Activated naive CD4-positive, alpha-beta T cell treated with anti-CD3 and anti-CD28 coated beads for 36 hours (primary cell): ENCODE measurements at regions of chr2 and their contacts with region 1.

Region 1: DNA sequence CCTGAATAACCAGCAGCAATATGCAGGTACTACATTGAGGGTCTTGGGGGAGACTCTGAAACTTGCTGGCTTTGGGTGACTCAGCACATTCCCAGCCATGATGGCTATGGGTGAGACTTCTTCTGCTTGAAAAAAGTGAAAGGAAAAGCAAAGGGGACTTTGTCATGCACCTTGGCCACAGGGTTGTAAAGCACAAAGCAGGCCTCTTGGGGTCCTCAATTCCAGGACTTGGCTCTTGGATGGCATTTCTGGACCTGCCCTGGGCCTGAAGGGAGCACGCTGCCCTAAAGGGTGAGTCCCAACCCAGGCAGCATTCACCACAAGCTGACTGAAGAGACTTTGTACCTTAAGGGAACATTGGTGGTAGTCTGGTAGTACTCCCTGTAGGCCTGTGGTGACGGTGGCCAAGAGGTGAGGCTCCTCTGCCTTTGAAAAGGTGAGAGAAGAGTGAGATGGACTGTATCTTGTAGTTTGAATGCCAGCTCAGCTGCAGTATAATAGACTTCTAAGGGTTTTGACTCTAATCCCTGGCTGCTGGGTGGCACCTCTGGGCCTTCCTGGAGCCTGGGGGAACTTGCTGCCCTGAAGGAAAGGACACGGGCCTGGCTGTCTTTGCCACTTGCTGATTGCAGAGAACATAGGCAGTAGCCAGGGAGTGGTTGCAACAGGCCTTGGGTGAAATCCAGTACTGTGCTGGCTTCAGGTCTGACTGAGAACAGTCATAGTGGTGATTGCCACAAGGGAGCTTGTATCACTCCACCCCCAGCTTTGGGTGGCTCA is 36.5 kb upstream of the CYTIP start:
- DNase-seq: peak; percentile 83
- H3K4me3 Mint-ChIP-seq: peak overlapping the region; percentile 64
- H3K27ac Mint-ChIP-seq: peak overlapping the region; percentile 95
- H3K4me1 Mint-ChIP-seq: peaks cover 85% of the 10 kb centered on the region
- H3K27me3 Mint-ChIP-seq: no peaks in the 10 kb centered on the region

Region 2: DNA sequence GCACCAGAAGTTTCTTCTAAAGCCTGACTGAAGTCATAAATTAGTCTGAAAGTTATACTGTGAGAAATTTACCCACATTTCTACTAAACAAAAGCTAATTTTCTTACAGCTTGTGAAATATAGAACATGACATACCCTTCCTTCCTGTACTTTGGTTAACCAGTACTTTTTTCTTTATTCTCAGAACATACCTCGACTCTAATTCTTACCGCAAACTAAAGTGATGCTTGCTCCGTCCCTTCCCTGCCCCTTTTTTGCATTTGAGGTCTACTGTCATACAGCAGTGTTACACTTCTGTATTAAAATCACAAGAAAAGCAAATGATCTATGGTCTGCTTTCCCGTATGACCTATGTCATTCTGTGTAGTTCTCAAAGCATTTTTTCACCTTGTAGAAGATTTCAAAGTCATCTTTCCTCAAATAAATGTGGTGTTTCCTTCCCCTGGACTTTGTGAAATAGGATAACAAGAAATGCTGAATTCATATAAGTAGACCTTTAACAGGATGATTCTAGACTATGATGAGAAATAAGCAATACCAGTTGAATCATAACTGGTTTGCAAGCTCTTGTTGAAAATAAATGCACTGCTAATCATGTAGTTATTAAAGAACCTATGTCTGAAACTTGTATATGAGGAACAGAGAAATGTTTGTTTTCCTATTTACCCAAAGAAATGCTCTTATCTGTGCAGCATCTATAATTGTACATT is 66.9 kb before region 1 on chr2:
- CTCF ChIA-PET with region 1: interaction called, 5 read pairs
- intact Hi-C with region 1: loop called (anchors 1 kb)
- DNase-seq: peak; percentile 78
- H3K4me3 Mint-ChIP-seq: peak overlapping the region; percentile 64
- H3K27ac Mint-ChIP-seq: peak overlapping the region; percentile 99
- H3K4me1 Mint-ChIP-seq: peaks cover 90% of the 10 kb centered on the region
- H3K27me3 Mint-ChIP-seq: no peaks in the 10 kb centered on the region

Region 3: GRCh38 chr2:157420771-157421323 is 59.5 kb before region 1 on chr2:
- CTCF ChIA-PET with region 1: interaction called, 5 read pairs
- intact Hi-C with region 1: loop called (anchors 2 kb)
- DNase-seq: peak; percentile 66
- H3K4me3 Mint-ChIP-seq: peak overlapping the region; percentile 33
- H3K27ac Mint-ChIP-seq: peak overlapping the region; percentile 95
- H3K4me1 Mint-ChIP-seq: peaks cover 79% of the 10 kb centered on the region
- H3K27me3 Mint-ChIP-seq: no peaks in the 10 kb centered on the region

Region 4: GRCh38 chr2:157492189-157492773 is 11.9 kb after region 1 on chr2:
- CTCF ChIA-PET with region 1: interaction called, 55 read pairs
- intact Hi-C with region 1: loop called (anchors 1 kb)
- DNase-seq: peak; percentile 89
- H3K4me3 Mint-ChIP-seq: no peak overlapping the region
- H3K27ac Mint-ChIP-seq: no peak overlapping the region
- H3K4me1 Mint-ChIP-seq: peaks cover 62% of the 10 kb centered on the region
- H3K27me3 Mint-ChIP-seq: no peaks in the 10 kb centered on the region

Region 5: DNA sequence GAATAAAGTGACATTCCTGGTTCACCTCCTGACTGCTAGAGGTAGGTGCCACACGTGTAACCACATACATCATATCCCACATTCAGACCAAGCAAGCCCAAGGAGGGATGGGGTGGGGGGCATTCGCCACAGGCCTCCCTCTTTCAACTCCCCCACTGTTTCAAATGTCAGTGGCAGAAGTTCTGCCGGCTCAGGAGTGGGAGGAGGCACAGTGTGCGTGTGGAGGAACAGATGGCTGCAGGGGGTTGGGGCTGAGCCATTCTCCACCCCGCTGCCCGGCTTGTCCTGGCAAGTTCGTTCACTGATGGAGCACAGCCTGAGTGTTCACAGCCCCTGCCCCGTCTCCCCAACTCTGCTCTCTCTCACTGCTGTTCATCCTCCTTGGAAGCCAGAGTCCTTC is 1412.7 kb after region 1 on chr2:
- CTCF ChIA-PET with region 1: no interaction called
- intact Hi-C with region 1: no loop called
- DNase-seq: no peak
- H3K4me3 Mint-ChIP-seq: no peak overlapping the region
- H3K27ac Mint-ChIP-seq: no peak overlapping the region
- H3K4me1 Mint-ChIP-seq: peaks cover 11% of the 10 kb centered on the region
- H3K27me3 Mint-ChIP-seq: peaks cover 4% of the 10 kb centered on the region